ENCODE measurements at regions of chr11 and their contacts with region 1.

Region 1: GRCh38 chr11:77473801-77474683 is at the start of gene PAK1:
- DNase-seq: peak; percentile 93
- H3K4me3 ChIP-seq: peak within 1 kb of the TSS; percentile 42 to 81 (median 66)
- H3K27ac ChIP-seq: peak within 1 kb of the TSS; percentile 46 to 78 (median 62)
- H3K4me1 ChIP-seq: peaks cover 0 to 17% (median 9%) of the 10 kb centered on the region in 4 donors
- H3K27me3 ChIP-seq: no peaks in the 10 kb centered on the region
- CTCF ChIP-seq: no peak
- EP300 ChIP-seq: peak in 1 of 4 donors; percentile 15
- POLR2A ChIP-seq: no peak
- total RNA-seq, gene PAK1: 24.6 to 43.5 (median 31.0) TPM

Region 2: DNA sequence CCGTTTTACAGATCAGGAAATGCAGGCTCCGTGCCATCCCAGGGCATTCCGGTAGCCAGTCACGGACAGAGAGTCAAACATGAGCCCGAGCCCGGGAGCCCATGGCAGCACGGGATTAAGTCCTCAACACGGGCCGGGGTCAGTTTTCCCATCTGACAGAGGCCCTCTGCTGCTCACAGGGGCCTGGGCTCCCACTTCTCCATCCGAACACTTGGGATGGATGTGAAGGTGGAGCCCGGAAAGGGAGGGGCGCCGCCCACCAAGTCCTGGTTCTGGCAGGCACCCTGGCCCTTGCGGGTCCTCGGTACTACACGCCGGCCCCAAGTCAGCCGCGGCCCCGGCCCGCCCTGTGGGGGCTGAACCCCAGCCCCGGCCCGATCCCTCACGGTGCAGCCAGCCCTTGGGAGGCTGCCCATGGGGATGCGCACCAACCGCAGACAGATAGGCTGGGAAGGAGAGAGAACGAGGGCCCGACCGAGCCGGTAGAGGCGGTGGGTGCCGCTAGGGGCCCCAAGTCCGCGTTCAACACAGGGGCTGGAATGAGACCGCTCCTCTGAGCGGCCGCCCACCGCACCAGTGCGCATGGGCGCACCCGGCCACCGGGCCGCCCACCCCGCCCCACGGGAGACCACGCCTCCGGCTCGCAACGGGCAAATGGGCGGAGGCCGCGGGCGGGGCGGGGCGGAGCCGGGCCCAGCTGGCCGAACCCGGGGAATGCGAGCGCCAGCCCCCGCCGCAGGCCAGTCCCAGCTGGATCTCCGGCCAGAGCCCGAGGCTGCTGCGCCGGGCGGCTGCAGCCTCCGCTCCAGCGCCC is 407.6 kb before region 1 on chr11 and contains the start of gene CAPN5:
- intact Hi-C with region 1: loop called (anchors 10 kb)
- DNase-seq: peak; percentile 95
- H3K4me3 ChIP-seq: peak within 1 kb of the TSS; percentile 56 to 77 (median 66)
- H3K27ac ChIP-seq: peak within 1 kb of the TSS; percentile 85 to 97 (median 94)
- H3K4me1 ChIP-seq: peaks cover 0 to 29% (median 24%) of the 10 kb centered on the region in 4 donors
- H3K27me3 ChIP-seq: no peaks in the 10 kb centered on the region
- CTCF ChIP-seq: peak in 3 of 4 experiments; percentile 34 to 38 (median 37)
- EP300 ChIP-seq: no peak
- POLR2A ChIP-seq: peak; percentile 83 to 92
- total RNA-seq, gene CAPN5: 4.1 to 12.5 (median 6.7) TPM

Region 3: GRCh38 chr11:77411717-77412441 is 62.2 kb before region 1 on chr11:
- intact Hi-C with region 1: loop called (anchors 2 kb)
- DNase-seq: peak; percentile 92
- H3K4me3 ChIP-seq: peak overlapping the region; percentile 43 to 67 (median 62)
- H3K27ac ChIP-seq: peak overlapping the region; percentile 84 to 89 (median 88)
- H3K4me1 ChIP-seq: peaks cover 0 to 45% (median 33%) of the 10 kb centered on the region in 4 donors
- H3K27me3 ChIP-seq: no peaks in the 10 kb centered on the region
- CTCF ChIP-seq: no peak
- EP300 ChIP-seq: no peak
- POLR2A ChIP-seq: peak; percentile 28 to 53